AG04450 (cell line): ENCODE measurements at regions of chr6 and their contacts with region 1.

Region 1: GRCh38 chr6:83199863-83200225 is 6.7 kb downstream of the RWDD2A start:
- DNase-seq: peak; percentile 47
- H3K4me3 ChIP-seq: no peak overlapping the region
- H3K27ac ChIP-seq: no peak overlapping the region
- H3K27me3 ChIP-seq: no peaks in the 10 kb centered on the region
- CTCF ChIP-seq: no peak

Region 2: GRCh38 chr6:82882363-82883023 is 317.4 kb before region 1 on chr6:
- CTCF ChIA-PET with region 1: no interaction called
- POLR2A ChIA-PET with region 1: no interaction called
- DNase-seq: no peak
- H3K4me3 ChIP-seq: no peak overlapping the region
- H3K27ac ChIP-seq: no peak overlapping the region
- H3K27me3 ChIP-seq: no peaks in the 10 kb centered on the region
- CTCF ChIP-seq: no peak

Region 3: GRCh38 chr6:83183082-83183828 is 16.6 kb before region 1 on chr6:
- CTCF ChIA-PET with region 1: no interaction called
- POLR2A ChIA-PET with region 1: no interaction called
- DNase-seq: peak; percentile 47
- H3K4me3 ChIP-seq: no peak overlapping the region
- H3K27ac ChIP-seq: peak overlapping the region; percentile 25
- H3K27me3 ChIP-seq: no peaks in the 10 kb centered on the region
- CTCF ChIP-seq: no peak

Region 4: GRCh38 chr6:83260577-83260976 is 60.7 kb after region 1 on chr6:
- CTCF ChIA-PET with region 1: no interaction called
- POLR2A ChIA-PET with region 1: interaction called, 10 read pairs
- DNase-seq: no peak
- H3K4me3 ChIP-seq: no peak overlapping the region
- H3K27ac ChIP-seq: no peak overlapping the region
- H3K27me3 ChIP-seq: no peaks in the 10 kb centered on the region
- CTCF ChIP-seq: no peak